Left colon (tissue), 2 donors: ENCODE measurements at regions of chr1 and their contacts with region 1.

Region 1: DNA sequence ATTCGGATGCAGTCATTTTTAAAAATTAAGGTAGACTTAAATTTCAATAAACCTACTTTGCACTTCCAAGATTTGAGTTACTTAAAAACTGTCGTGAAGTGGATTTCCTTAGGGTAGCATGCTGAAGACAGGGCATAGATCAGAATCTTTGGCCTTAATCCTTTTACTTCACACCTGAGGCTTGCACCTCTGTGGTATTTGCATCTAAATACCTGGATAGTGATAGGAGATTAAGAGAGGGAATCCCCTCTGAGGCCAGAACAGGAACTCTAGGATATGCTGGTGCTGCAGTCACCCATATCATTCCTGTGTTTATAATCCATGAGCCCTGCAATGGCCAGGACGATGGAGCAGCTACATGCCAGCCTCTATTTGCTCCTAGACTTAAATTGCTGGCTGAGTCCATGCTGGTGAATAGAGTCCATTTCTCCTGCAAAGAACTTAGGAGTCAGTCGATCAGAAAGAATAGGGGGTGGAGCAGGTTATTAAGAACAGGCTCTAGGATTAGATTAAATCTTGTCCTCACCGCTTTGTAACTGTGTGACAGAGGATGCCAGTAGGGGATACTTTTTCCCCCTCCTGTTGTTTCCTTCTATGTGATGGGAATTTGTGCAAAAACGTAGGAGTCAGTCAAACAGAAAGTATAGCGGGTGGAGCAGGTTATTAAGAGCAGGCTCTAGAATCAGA is 333.6 kb downstream of the DUSP10 start:
- DNase-seq: no peak
- ATAC-seq: no peak

Region 2: GRCh38 chr1:221284028-221284427 is 124.2 kb before region 1 on chr1:
- intact Hi-C with region 1: loop called in 1 of 2 experiments (anchors 10 kb)
- DNase-seq: no peak
- ATAC-seq: no peak